ENCODE measurements at regions of chr11 and their contacts with region 1.

Region 1: GRCh38 chr11:13210424-13210823 is 67.2 kb upstream of the BMAL1 start:
- DNase-seq: no peak
- H3K4me3 ChIP-seq: no peak overlapping the region
- H3K27ac ChIP-seq: no peak overlapping the region
- H3K4me1 ChIP-seq: peaks cover 7 to 21% (median 8%) of the 10 kb centered on the region in 4 donors
- H3K27me3 ChIP-seq: no peaks in the 10 kb centered on the region
- CTCF ChIP-seq: peak; percentile 67 to 76 (median 67)
- EP300 ChIP-seq: no peak
- POLR2A ChIP-seq: no peak

Region 2: DNA sequence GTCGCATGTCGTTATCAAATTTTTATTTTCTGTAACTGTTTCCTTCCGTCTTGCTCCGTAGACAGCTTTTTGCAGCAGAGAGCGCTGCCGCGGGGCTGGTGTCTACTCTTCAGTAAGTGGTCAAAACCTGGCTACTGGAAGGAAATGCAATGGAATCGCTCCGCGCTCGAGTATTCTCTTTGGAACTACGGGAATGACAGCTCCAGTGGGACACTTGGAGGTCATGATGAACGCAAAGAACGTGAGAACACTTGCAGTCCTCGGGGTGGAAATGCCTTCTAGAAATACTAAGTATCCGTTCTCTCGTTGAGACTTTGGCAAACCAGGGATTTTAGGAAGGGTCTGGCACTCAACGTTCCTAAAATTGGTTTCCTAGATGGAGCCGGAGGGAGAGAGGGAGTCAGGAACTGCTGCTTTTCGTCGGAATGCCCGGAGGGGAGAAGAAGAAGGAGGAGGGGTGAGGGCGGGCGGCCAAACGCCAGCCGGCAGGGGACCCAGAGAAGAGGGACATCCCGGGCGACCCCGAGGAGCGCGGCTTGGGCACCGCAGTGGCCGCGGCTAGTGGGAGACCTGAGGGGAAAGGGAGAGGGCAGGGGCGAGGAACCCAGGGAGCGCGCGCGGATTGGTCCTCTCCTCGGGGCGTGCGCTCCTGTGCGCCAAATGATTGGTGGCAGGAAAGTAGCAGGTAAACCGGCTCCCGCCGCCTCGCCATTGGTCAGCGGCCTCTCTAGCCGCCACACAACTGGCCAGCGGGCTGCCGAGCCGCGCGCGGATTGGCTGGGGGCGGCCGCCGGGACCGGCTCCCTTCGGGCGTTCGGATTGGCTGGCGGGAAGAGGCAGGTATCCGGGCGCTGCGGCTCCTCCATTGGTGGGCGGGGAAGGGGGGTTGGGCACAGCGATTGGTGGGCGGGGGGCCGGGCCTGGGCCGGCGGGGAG is 66.7 kb after region 1 on chr11:
- intact Hi-C with region 1: loop called (anchors 5 kb)
- DNase-seq: peak; percentile 100
- H3K4me3 ChIP-seq: peak overlapping the region; percentile 83 to 100 (median 94)
- H3K27ac ChIP-seq: peak overlapping the region; percentile 94 to 97 (median 96)
- H3K4me1 ChIP-seq: peaks cover 17 to 46% (median 32%) of the 10 kb centered on the region in 4 donors
- H3K27me3 ChIP-seq: no peaks in the 10 kb centered on the region
- CTCF ChIP-seq: peak in 1 of 3 experiments; percentile 33
- EP300 ChIP-seq: no peak
- POLR2A ChIP-seq: peak; percentile 57

Region 3: DNA sequence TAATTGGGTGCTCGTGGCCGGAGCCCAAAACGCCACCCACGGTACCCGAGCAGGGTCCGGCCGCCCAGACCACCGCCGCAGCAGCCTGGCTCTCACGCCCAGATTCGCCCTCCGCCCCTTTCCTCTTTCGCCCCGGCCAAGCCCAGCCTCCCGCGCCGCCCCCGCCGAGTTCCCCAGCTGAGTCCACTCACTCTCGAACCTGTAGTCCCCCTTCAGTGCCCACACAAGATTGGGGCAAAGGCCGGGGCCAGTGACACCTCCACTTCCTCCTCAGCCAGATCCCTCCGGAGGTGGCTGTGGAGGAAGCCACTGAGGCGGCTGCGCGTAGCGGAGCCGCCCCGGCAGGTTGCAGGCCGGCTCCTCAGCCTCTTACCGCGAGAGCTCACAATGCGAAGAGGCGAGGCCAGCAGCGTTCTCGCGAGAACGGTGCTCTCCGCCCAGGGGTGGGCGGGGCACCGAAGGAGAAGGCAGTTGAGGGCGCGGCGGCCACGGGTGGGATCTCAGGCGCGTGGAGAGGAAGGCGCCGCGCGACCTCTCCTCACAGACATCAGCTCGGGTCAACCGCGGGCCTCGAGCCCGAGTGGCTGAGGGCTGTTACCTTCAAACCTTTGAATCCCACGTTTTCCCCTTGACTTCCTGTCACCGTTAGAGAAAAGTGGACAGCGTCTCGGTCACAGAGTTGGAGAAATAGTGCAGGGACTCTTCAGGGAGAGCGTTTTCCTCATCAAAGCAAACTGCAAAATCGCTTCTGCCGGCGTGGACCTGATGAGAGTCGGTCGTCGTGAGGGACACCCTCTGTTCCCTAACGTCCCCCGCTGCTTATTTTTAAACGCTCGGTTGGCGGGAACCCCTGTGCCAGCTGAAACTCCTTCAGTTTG is 252.7 kb after region 1 on chr11 and contains the start of gene BTBD10:
- intact Hi-C with region 1: loop called (anchors 5 kb)
- DNase-seq: peak; percentile 96
- H3K4me3 ChIP-seq: peak within 1 kb of the TSS; percentile 76 to 89 (median 80)
- H3K27ac ChIP-seq: peak within 1 kb of the TSS; percentile 88 to 91 (median 90)
- H3K4me1 ChIP-seq: peaks cover 18 to 29% (median 23%) of the 10 kb centered on the region in 4 donors
- H3K27me3 ChIP-seq: no peaks in the 10 kb centered on the region
- CTCF ChIP-seq: no peak
- EP300 ChIP-seq: no peak
- POLR2A ChIP-seq: peak; percentile 66
- total RNA-seq, gene BTBD10: 33.4 to 59.8 (median 48.7) TPM